ENCODE measurements at regions of chr13 and their contacts with region 1.

Region 1: GRCh38 chr13:94660695-94661326 is 51.5 kb downstream of the SOX21 start:
- DNase-seq: no peak
- ATAC-seq: peak; percentile 62
- H3K4me3 Mint-ChIP-seq: no peak overlapping the region
- H3K27ac Mint-ChIP-seq: no peak overlapping the region
- H3K4me1 Mint-ChIP-seq: peaks cover 38% of the 10 kb centered on the region
- H3K27me3 Mint-ChIP-seq: peaks cover 5% of the 10 kb centered on the region
- CTCF ChIP-seq: 0 out of 2 replicates have a peak, but pooled peaks have one; percentile 22

Region 2: GRCh38 chr13:94674609-94675348 is 14.0 kb after region 1 on chr13:
- CTCF ChIA-PET with region 1: interaction called, 33 read pairs
- POLR2A ChIA-PET with region 1: no interaction called
- DNase-seq: peak; percentile 78
- ATAC-seq: peak; percentile 91
- H3K4me3 Mint-ChIP-seq: no peak overlapping the region
- H3K27ac Mint-ChIP-seq: no peak overlapping the region
- H3K4me1 Mint-ChIP-seq: peaks cover 20% of the 10 kb centered on the region
- H3K27me3 Mint-ChIP-seq: no peaks in the 10 kb centered on the region; the same call in 1 of the 2 replicates
- CTCF ChIP-seq: peak; percentile 68

Region 3: GRCh38 chr13:95156208-95156607 is 495.4 kb after region 1 on chr13:
- CTCF ChIA-PET with region 1: interaction called, 12 read pairs
- POLR2A ChIA-PET with region 1: no interaction called
- DNase-seq: no peak
- ATAC-seq: no peak
- H3K4me3 Mint-ChIP-seq: no peak overlapping the region
- H3K27ac Mint-ChIP-seq: no peak overlapping the region
- H3K4me1 Mint-ChIP-seq: peaks cover 41% of the 10 kb centered on the region
- H3K27me3 Mint-ChIP-seq: peaks cover 25% of the 10 kb centered on the region
- CTCF ChIP-seq: no peak

Measured in WTC11 (cell line).